CD8-positive, alpha-beta T cell (primary cell): ENCODE measurements at regions of chr6 and their contacts with region 1.

Region 1: GRCh38 chr6:3195695-3196497 is 31.6 kb downstream of the TUBB2B start:
- DNase-seq: peak in 2 of 9 experiments; percentile 6 to 25
- ATAC-seq: no peak
- H3K4me3 ChIP-seq: no peak overlapping the region
- H3K4me3 Mint-ChIP-seq: no peak overlapping the region
- H3K27ac ChIP-seq: no peak overlapping the region
- H3K27ac Mint-ChIP-seq: no peak overlapping the region
- H3K4me1 ChIP-seq: no peaks in the 10 kb centered on the region
- H3K4me1 Mint-ChIP-seq: no peaks in the 10 kb centered on the region
- H3K27me3 ChIP-seq: no peaks in the 10 kb centered on the region
- H3K27me3 Mint-ChIP-seq: peaks cover 5% of the 10 kb centered on the region
- CTCF ChIP-seq: no peak

Region 2: DNA sequence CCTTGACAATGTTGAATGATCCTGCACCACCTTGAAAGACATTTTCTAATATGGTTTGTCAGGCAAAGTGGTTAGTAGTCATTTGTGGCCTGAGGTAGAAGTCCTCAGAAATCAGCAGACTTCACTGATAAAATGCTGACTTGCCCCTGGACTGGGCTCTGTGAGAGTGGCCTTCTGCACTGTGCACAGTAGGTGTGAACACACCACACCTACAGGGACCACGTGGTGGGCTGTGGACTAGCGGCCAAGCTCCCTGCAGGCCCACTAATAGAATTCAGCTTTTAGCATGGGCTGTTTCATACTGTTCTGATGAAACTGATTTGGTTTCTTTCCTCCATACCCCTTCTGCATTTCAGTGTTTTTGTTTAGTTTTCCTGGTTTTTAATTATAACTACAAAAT is 70.1 kb before region 1 on chr6:
- CTCF ChIA-PET with region 1: no interaction called
- POLR2A ChIA-PET with region 1: no interaction called
- intact Hi-C with region 1: loop called in 1 of 2 experiments (anchors 1 kb)
- DNase-seq: no peak
- ATAC-seq: no peak
- H3K4me3 ChIP-seq: no peak overlapping the region
- H3K4me3 Mint-ChIP-seq: no peak overlapping the region
- H3K27ac ChIP-seq: no peak overlapping the region
- H3K27ac Mint-ChIP-seq: no peak overlapping the region
- H3K4me1 ChIP-seq: no peaks in the 10 kb centered on the region
- H3K4me1 Mint-ChIP-seq: peaks cover 4% of the 10 kb centered on the region
- H3K27me3 ChIP-seq: no peaks in the 10 kb centered on the region
- H3K27me3 Mint-ChIP-seq: no peaks in the 10 kb centered on the region
- CTCF ChIP-seq: no peak